WTC11 (cell line): ENCODE measurements at regions of chr1 and their contacts with region 1.

Region 1: GRCh38 chr1:116020668-116021275 is 44.5 kb downstream of the SLC22A15 start:
- DNase-seq: peak; percentile 78
- ATAC-seq: peak; percentile 97
- H3K4me3 Mint-ChIP-seq: no peak overlapping the region
- H3K27ac Mint-ChIP-seq: no peak overlapping the region
- H3K4me1 Mint-ChIP-seq: peaks cover 4% of the 10 kb centered on the region; the same call in 1 of the 2 replicates
- H3K27me3 Mint-ChIP-seq: no peaks in the 10 kb centered on the region
- CTCF ChIP-seq: peak; percentile 79

Region 2: DNA sequence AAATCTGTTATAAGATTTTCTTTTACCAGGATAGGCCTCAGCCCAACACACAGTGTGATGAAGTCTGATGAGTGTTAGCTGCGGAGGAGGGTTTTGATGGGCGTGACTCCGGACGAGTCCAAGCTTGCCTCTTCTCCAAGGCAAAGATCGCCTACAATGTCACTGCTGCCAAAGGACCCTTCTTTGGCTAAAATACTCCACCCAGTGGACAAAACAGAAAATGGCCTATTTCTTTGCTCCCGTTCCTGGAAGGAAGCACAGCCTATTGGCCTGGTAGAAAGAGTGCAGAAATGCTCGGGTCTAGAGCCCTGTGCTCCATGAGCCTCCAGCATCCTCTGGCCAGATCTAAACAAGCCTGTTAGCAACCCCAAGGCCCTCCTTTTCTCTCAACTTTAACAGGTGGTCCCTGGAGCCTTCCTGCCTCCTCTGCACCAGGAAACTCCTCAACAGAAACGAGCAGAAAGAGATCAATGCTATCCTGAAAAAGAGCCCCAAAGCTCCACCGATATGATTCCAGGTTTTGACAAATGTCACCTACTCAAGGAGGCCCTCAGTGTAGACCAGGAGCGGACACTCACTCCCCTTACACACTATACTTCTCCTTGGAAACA is 248.8 kb before region 1 on chr1:
- CTCF ChIA-PET with region 1: interaction called, 22 read pairs
- POLR2A ChIA-PET with region 1: no interaction called
- DNase-seq: peak; percentile 48
- ATAC-seq: peak; percentile 95
- H3K4me3 Mint-ChIP-seq: peak overlapping the region; percentile 29
- H3K27ac Mint-ChIP-seq: no peak overlapping the region
- H3K4me1 Mint-ChIP-seq: peaks cover 7% of the 10 kb centered on the region
- H3K27me3 Mint-ChIP-seq: no peaks in the 10 kb centered on the region
- CTCF ChIP-seq: peak; percentile 48

Region 3: DNA sequence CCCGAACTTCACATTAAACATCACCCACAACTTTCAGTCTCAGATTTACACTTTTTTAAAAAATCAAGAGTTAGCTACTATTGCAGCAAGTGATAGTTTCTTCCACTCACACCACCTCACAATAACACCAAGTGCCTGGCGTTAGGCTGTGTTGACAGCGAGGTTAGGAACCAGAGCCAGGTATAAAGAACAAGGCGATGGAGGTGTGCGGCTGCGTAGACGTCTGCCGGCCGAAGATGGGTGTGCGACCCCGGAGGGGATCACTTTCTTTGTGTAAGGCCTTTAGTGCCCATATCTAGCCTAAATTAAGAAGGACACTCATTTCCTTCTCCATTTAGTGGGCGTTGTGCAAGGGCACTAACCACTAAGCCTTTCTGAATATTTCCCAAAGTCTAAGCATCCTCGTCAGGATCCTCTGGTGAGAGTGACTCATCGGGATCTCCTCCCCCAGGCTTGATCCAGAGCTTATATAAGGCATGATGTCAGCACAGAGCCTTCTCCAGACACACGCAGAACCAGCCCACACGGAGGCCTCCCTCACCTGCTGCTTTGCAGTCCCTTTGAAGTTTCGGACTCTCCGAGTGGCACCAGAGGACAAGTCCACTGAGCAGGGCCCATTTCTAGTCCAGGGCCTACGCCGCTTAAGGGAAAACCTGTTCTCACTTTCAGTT is 191.6 kb before region 1 on chr1:
- CTCF ChIA-PET with region 1: interaction called, 12 read pairs
- POLR2A ChIA-PET with region 1: no interaction called
- DNase-seq: no peak
- ATAC-seq: no peak
- H3K4me3 Mint-ChIP-seq: peak overlapping the region; percentile 65
- H3K27ac Mint-ChIP-seq: 0 out of 2 replicates have a peak overlapping the region, but pooled peaks have one; percentile 6
- H3K4me1 Mint-ChIP-seq: peaks cover 54% of the 10 kb centered on the region
- H3K27me3 Mint-ChIP-seq: peaks cover 17% of the 10 kb centered on the region
- CTCF ChIP-seq: no peak

Region 4: GRCh38 chr1:115958866-115959265 is 61.9 kb before region 1 on chr1:
- CTCF ChIA-PET with region 1: no interaction called
- POLR2A ChIA-PET with region 1: no interaction called
- DNase-seq: no peak
- ATAC-seq: no peak
- H3K4me3 Mint-ChIP-seq: no peak overlapping the region
- H3K27ac Mint-ChIP-seq: no peak overlapping the region; the same call in 1 of the 2 replicates
- H3K4me1 Mint-ChIP-seq: peaks cover 68% of the 10 kb centered on the region
- H3K27me3 Mint-ChIP-seq: no peaks in the 10 kb centered on the region; the same call in 1 of the 2 replicates
- CTCF ChIP-seq: no peak

Region 5: DNA sequence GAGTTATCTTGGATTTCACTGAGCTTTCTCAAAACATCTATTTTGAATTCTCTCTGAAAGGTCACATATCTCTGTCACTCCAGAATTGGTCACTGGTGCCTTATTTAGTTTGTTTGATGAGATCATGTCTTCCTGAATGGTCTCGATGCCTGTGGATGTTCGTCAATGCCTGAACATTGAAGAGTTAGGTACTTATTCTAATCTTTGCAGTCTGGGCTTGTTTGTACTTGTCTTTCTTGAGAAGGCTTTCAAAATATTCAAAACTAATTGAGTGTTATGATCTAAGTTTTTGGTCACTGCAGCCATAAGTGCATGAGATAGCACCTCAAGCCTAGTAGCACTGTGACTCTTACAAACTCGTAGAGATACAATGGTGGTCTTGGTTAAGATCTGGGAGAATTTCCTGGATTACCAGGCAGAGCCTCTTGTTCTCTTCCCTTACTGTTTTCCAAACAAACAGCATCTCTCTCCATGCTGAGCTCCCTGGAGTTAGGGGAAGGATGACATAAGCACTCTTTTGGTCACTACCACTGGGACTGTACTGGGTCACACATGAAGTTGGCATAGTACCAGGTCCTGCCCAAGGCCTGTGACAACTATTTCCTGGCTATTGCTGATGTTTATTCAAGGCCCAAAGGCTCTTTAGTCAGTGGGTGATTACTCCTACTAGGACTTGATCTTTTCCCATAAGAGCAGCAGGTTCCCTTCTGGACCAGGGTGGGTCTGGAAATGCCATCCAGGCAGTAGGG is 18.9 kb before region 1 on chr1:
- CTCF ChIA-PET with region 1: interaction called, 13 read pairs
- POLR2A ChIA-PET with region 1: no interaction called
- DNase-seq: no peak
- ATAC-seq: no peak
- H3K4me3 Mint-ChIP-seq: no peak overlapping the region
- H3K27ac Mint-ChIP-seq: no peak overlapping the region
- H3K4me1 Mint-ChIP-seq: peaks cover 15% of the 10 kb centered on the region
- H3K27me3 Mint-ChIP-seq: no peaks in the 10 kb centered on the region
- CTCF ChIP-seq: no peak

Region 6: GRCh38 chr1:116033322-116033721 is 12.6 kb after region 1 on chr1:
- CTCF ChIA-PET with region 1: interaction called, 15 read pairs
- POLR2A ChIA-PET with region 1: no interaction called
- DNase-seq: no peak
- ATAC-seq: no peak
- H3K4me3 Mint-ChIP-seq: no peak overlapping the region
- H3K27ac Mint-ChIP-seq: no peak overlapping the region
- H3K4me1 Mint-ChIP-seq: peaks cover 7% of the 10 kb centered on the region; the same call in 1 of the 2 replicates
- H3K27me3 Mint-ChIP-seq: no peaks in the 10 kb centered on the region
- CTCF ChIP-seq: no peak